WTC11 (cell line): ENCODE measurements at regions of chr9 and their contacts with region 1.

Region 1: DNA sequence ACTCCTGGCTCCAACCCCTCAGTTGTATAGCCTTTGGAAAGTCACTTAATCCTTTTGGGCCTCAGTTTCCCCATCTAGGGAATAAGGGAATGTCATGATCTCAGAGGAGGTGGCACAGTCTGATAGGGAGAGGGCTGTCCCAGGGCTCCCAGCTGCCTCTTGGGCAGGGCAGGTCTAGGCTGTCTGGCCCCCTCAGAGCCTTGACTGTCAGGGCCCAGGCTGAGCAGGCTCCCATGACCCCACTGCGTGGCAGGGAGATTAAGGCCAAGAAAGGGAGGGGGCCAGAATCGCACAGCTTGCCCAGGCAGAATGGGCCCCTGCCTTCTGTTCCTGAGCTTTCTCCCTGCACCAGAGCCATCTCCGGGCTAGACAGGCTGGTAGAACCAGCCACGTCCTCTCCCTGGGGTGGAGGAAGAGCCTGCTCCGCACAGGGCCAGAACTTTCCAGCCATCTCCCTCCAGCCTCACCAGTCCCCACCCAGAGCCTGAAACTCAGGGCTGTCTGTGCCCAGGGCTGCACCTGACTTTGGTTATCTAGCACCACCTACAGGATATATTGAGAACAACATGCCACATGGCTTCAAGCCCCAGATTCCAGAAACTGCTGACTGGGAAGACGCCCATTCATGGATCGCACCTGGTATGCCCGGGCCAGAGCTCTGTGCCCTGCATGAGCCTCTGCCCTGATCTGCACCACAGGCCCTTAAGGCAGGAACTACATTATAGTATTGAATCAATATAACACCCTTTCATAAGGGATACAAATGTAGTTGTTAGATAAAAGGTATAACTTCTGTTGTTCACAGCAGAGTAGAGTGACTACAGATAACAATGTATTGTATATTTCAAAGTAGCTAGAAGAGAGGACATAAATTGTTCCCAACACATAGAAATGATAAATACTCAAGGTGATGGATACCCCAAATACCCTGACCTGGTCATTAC is 32.0 kb downstream of the NAIF1 start:
- DNase-seq: peak; percentile 80
- ATAC-seq: peak; percentile 98
- H3K4me3 Mint-ChIP-seq: no peak overlapping the region
- H3K27ac Mint-ChIP-seq: peak overlapping the region; percentile 6
- H3K4me1 Mint-ChIP-seq: 0 out of 2 replicates have a peak, but pooled peaks cover 2% of the 10 kb centered on the region
- H3K27me3 Mint-ChIP-seq: no peaks in the 10 kb centered on the region
- CTCF ChIP-seq: peak; percentile 93

Region 2: DNA sequence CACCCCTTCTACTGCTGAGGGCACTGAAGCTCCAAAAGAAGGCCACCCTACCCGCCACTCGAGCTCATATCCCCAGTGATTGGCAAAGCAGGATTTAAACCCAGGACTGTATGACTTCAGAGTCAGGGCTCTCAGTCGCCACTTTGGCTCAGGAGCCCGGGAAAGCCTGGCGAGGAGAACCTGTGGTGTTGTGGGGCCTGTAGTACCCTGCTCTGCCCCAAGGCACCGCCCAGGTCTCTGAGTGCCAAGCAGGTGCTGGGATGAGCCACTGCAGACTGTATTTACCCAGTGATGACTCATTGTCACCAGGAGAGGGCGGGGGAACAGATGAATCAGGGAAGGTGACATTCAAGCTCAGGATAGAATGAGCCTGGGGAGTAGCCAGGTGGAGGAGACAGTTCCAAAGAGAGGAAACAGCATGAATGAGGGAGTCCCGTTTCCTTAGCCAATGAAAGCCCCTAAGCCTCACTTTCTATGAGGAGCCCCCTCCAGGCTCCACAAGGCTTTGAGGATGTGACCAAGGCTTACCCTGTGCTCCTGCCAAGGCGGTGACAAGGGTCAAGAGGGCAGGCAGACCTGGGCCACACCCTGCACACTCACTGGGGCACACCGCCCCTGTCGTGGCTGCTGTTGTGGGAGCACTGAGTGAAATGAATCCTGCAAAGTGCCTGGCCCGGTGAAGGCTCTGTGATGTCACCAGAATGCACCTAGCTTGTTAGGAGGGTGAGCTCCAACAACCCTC is 79.6 kb before region 1 on chr9:
- CTCF ChIA-PET with region 1: interaction called, 75 read pairs
- POLR2A ChIA-PET with region 1: interaction called, 3 read pairs
- DNase-seq: peak; percentile 76
- ATAC-seq: peak; percentile 96
- H3K4me3 Mint-ChIP-seq: no peak overlapping the region
- H3K27ac Mint-ChIP-seq: peak overlapping the region; percentile 80
- H3K4me1 Mint-ChIP-seq: peaks cover 18% of the 10 kb centered on the region
- H3K27me3 Mint-ChIP-seq: no peaks in the 10 kb centered on the region
- CTCF ChIP-seq: peak; percentile 32; the same call in 1 of the 2 replicates

Region 3: DNA sequence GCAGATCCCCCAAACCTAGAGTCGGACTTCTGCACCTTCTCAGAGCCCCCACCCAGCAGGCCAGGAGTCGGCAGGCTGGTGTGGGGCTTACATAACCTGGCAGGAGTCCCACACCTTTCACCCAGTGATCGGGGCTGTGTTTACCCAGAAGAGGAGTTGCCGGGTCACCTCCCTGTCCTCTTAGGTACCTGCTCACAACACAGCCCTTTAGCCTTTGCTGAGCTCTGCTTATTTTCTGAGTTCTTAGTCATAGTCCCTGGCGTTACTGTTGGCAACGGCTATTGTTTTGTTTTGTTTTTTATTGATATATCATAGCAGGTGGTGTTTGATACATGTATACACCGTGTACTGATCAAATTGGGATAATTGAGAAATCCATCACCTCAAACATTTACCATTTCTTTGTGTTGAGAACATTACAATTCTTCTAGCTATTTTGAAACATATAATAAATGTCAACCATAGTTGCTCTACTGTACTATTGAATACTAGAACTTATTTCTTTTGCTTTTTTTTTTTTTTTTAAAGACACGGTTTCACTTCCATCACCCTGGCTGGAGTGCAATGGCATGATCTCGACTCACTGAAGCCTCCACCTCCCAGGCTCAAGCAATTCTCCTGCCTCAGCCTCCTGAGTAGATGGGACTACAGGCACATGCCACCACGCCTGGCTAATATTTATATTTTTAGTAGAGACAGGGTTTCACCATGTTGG is 43.9 kb before region 1 on chr9:
- CTCF ChIA-PET with region 1: interaction called, 10 read pairs
- POLR2A ChIA-PET with region 1: no interaction called
- DNase-seq: no peak
- ATAC-seq: no peak
- H3K4me3 Mint-ChIP-seq: no peak overlapping the region
- H3K27ac Mint-ChIP-seq: no peak overlapping the region
- H3K4me1 Mint-ChIP-seq: no peaks in the 10 kb centered on the region
- H3K27me3 Mint-ChIP-seq: no peaks in the 10 kb centered on the region
- CTCF ChIP-seq: no peak

Region 4: DNA sequence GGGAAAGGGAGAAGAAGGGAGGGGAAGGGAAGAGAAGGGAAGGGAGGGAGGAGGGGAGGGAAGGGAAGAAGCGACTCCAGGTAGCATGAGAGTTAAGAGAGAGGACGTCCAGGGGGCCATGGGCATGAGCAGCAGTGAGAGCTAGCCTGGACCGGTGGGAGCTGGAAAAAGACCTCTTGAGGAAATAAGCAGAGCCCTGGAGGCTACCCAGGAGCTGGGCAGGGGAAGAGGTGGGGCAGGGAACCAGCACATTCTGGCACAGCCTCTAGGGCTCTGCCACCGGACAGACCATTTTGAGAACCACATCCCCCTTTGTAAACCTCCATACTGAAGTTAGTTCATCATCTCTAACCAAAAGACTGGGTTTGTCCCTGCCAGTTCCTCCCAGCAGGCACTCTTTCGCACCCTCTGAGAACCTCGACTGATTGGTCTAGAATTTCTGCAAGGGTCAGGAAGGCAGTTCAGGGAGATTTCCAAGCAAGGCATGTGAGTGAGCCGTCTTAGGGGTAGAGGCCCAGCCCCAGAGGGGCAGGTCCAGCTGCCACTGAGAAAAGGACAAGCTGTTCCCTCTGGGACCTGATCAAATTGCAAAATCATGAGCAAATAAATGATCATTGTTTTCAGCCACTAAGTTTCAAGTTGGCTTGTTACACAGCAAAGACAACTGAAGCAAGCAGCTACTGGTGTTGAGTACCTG is 20.4 kb after region 1 on chr9:
- CTCF ChIA-PET with region 1: interaction called, 16 read pairs
- POLR2A ChIA-PET with region 1: no interaction called
- DNase-seq: no peak
- ATAC-seq: peak; percentile 23; the same call in 1 of the 2 replicates
- H3K4me3 Mint-ChIP-seq: no peak overlapping the region
- H3K27ac Mint-ChIP-seq: peak overlapping the region; percentile 57
- H3K4me1 Mint-ChIP-seq: peaks cover 31% of the 10 kb centered on the region
- H3K27me3 Mint-ChIP-seq: no peaks in the 10 kb centered on the region
- CTCF ChIP-seq: no peak